Activated CD4-positive, alpha-beta T cell treated with anti-CD3 and anti-CD28 coated beads for 36 hours (primary cell): ENCODE measurements at regions of chr11 and their contacts with region 1.

Region 1: DNA sequence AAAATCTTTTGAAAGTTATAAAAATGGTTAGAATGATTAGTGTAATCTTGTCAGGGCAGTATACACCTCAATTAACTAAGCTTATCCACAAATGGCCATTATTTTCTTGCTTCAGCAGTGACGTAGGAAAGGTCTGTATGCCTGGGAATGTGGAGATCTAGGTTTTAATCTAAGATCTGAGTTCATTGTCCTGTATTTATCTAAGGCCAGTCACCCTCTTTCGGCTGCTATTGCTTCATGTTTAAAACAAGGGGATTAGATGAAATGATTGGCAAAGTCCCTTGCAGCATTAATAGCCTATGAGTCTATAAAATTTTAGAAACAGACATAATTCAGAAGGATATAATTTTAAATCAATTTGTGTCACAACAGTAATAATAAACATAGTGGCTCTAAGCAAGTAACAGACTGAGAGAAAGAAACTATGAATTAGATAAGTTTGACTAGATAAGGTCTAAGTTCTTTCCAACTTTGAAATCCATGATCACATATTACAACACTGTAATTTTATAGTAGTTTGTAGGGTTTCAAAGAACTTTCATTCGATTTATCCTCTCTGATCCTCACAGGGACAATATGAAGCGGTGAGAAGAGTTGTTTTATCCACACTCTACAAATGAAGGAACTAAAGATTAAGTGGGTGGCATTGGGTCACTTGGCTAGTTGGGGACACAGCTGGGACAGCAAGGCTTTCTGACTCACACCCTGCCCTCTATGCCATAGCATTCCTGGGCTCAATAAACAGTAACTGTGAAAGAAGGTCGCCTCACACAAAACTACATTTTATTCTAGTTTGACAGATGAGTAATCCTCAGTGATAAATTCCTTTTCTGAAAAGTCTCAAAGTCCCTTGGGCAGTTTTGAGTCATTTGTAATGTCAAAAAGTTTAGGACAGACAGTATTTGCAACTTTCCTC is 60.6 kb upstream of the RDX start:
- DNase-seq: no peak
- ATAC-seq: peak; percentile 84
- H3K4me3 Mint-ChIP-seq: no peak overlapping the region
- H3K27ac Mint-ChIP-seq: peak overlapping the region; percentile 70
- H3K4me1 Mint-ChIP-seq: peaks cover 20% of the 10 kb centered on the region
- H3K27me3 Mint-ChIP-seq: no peaks in the 10 kb centered on the region

Region 2: DNA sequence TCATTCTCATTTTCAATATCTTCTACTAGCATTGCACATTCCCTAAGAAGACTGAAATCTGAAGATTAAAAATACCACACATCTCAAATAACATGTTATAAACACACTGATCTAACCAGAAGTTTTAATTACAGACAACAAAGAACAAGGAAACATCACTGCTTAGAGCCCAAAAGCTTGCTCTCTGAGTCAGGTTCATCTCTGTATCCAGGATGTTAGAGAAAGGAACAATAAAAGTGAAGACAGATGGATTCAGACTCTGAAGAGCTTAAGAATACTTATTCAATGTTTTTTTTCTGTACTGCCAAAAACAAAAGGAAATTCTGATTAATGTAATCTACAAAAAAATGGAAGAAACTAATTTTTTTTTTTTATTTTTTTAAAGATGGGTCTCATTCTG is 77.1 kb before region 1 on chr11:
- CTCF ChIA-PET with region 1: no interaction called
- POLR2A ChIA-PET with region 1: no interaction called
- intact Hi-C with region 1: no loop called
- DNase-seq: no peak
- ATAC-seq: no peak
- H3K4me3 Mint-ChIP-seq: no peak overlapping the region
- H3K27ac Mint-ChIP-seq: no peak overlapping the region
- H3K4me1 Mint-ChIP-seq: no peaks in the 10 kb centered on the region
- H3K27me3 Mint-ChIP-seq: no peaks in the 10 kb centered on the region

Region 3: GRCh38 chr11:110376711-110377324 is 19.8 kb after region 1 on chr11:
- CTCF ChIA-PET with region 1: interaction called, 4 read pairs
- POLR2A ChIA-PET with region 1: no interaction called
- intact Hi-C with region 1: loop called in 1 of 2 experiments (anchors 1 kb)
- DNase-seq: peak; percentile 37
- ATAC-seq: peak; percentile 10
- H3K4me3 Mint-ChIP-seq: no peak overlapping the region
- H3K27ac Mint-ChIP-seq: no peak overlapping the region
- H3K4me1 Mint-ChIP-seq: peaks cover 17% of the 10 kb centered on the region
- H3K27me3 Mint-ChIP-seq: peaks cover 3% of the 10 kb centered on the region

Region 4: GRCh38 chr11:110392056-110392455 is 35.0 kb after region 1 on chr11:
- CTCF ChIA-PET with region 1: no interaction called
- POLR2A ChIA-PET with region 1: no interaction called
- intact Hi-C with region 1: no loop called
- DNase-seq: no peak
- ATAC-seq: no peak
- H3K4me3 Mint-ChIP-seq: no peak overlapping the region
- H3K27ac Mint-ChIP-seq: no peak overlapping the region
- H3K4me1 Mint-ChIP-seq: peaks cover 4% of the 10 kb centered on the region
- H3K27me3 Mint-ChIP-seq: peaks cover 3% of the 10 kb centered on the region